ENCODE measurements at regions of chr1 and their contacts with region 1.

Region 1: GRCh38 chr1:110407260-110408210 is at the start of gene LAMTOR5:
- DNase-seq: peak; percentile 90
- H3K4me3 Mint-ChIP-seq: peak within 1 kb of the TSS; percentile 100
- H3K27ac Mint-ChIP-seq: peak within 1 kb of the TSS; percentile 100
- H3K4me1 Mint-ChIP-seq: peaks cover 9% of the 10 kb centered on the region
- H3K27me3 Mint-ChIP-seq: no peaks in the 10 kb centered on the region
- CTCF ChIP-seq: no peak
- total RNA-seq, gene LAMTOR5: 111 and 127 TPM in 2 replicates

Region 2: DNA sequence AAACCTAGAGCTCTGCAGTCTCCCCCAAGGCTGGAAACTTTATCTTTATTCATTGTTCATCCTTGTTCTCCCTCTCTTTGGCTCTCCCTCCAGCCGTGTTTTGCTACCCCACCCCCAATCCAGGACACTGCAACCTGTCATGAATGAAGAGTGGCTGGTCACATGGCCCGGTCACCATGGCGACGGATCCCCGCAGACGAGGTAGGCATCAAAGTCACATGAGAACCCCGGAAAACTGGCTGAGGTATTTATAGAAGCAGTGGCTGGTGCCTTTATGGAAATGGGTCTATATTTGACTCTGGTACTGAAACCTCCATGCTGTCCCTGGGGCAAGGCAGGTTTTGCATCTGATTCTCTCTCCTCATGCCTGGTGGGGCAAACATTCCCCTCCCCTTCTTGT is 270.6 kb before region 1 on chr1:
- CTCF ChIA-PET with region 1: no interaction called
- POLR2A ChIA-PET with region 1: no interaction called
- intact Hi-C with region 1: no loop called
- DNase-seq: no peak
- H3K4me3 Mint-ChIP-seq: no peak overlapping the region
- H3K27ac Mint-ChIP-seq: no peak overlapping the region
- H3K4me1 Mint-ChIP-seq: no peaks in the 10 kb centered on the region
- H3K27me3 Mint-ChIP-seq: peaks cover 74% of the 10 kb centered on the region
- CTCF ChIP-seq: no peak

Region 3: DNA sequence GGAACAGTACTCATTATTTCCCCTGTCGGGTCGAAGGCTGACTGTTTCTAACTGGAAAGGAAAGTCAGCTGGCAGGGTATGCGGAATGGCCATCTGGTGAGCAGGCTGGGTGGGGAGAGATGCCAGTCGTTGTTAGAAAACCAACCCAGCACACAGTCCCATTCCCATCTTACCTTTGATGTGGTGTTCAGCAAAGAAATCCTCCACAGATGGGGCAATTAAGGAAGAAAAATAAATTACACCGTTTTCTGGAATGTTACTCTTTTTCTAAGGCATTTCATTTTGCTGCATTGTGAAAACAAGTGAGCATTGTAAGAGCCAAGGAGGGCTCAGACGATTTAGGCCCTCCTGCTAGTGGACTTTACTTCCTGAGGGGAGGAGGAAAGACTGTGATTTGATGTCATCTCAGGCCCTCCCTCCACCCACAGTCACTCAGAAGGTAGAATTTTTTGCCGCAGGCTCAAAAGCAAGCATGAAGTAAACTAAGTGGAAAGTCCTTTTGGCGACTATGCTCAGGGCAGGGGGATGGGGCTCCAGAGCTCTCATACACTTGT is 16.8 kb before region 1 on chr1 and contains the start of gene SLC16A4:
- CTCF ChIA-PET with region 1: interaction called, 5 read pairs
- POLR2A ChIA-PET with region 1: interaction called, 15 read pairs
- intact Hi-C with region 1: no loop called
- DNase-seq: peak; percentile 55
- H3K4me3 Mint-ChIP-seq: peak within 1 kb of the TSS; percentile 66
- H3K27ac Mint-ChIP-seq: peak within 1 kb of the TSS; percentile 57
- H3K4me1 Mint-ChIP-seq: peaks cover 35% of the 10 kb centered on the region
- H3K27me3 Mint-ChIP-seq: no peaks in the 10 kb centered on the region
- CTCF ChIP-seq: no peak
- total RNA-seq, gene SLC16A4: 9.8 and 11.0 TPM in 2 replicates

Region 4: DNA sequence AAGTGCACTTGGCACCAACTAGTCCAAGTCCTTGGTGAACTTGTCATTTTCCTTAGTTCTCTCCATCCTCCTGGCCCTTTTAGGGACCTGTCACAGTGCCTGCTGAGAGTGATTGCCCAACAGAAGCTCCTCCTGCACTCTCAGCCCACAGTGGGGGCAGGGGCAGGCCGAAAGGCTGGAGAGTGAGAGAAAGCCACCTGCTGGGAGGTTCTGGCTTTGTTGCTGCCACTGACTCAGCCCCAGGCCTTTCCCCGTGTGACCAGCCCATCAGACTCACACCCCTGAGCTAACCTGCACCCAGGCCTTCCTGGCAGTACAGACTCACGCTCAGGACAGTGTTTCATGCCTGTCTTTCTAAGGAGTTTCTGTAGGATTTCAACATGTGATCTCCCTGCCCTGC is 26.3 kb after region 1 on chr1:
- CTCF ChIA-PET with region 1: interaction called, 200 read pairs
- POLR2A ChIA-PET with region 1: interaction called, 33 read pairs
- intact Hi-C with region 1: loop called (anchors 1 kb)
- DNase-seq: peak; percentile 86
- H3K4me3 Mint-ChIP-seq: no peak overlapping the region
- H3K27ac Mint-ChIP-seq: peak overlapping the region; percentile 80
- H3K4me1 Mint-ChIP-seq: peaks cover 15% of the 10 kb centered on the region
- H3K27me3 Mint-ChIP-seq: peaks cover 26% of the 10 kb centered on the region
- CTCF ChIP-seq: peak; percentile 30

Region 5: DNA sequence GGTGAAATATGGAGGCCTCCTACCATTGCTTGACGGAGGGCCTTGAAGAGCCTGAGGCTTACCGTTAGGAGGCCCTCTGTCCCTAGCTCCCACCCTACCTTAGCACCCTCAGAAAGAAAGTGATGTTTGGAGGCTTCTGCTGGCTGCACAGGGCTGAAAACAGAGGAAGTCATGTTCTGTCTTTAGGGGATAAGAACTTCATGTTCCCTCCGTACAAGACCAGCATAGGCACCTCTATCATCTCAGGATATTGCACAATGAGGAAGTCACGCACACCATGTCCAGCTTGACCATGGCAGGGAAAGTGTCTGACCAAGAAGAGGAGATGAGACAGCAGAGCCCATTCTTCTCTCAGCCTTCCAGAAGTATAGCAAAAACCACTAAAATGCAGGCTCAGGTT is 1082.1 kb after region 1 on chr1:
- CTCF ChIA-PET with region 1: no interaction called
- POLR2A ChIA-PET with region 1: no interaction called
- intact Hi-C with region 1: no loop called
- DNase-seq: no peak
- H3K4me3 Mint-ChIP-seq: no peak overlapping the region
- H3K27ac Mint-ChIP-seq: no peak overlapping the region
- H3K4me1 Mint-ChIP-seq: no peaks in the 10 kb centered on the region
- H3K27me3 Mint-ChIP-seq: peaks cover 15% of the 10 kb centered on the region
- CTCF ChIP-seq: no peak